IMR-90 (cell line): ENCODE measurements at regions of chr10 and their contacts with region 1.

Region 1: DNA sequence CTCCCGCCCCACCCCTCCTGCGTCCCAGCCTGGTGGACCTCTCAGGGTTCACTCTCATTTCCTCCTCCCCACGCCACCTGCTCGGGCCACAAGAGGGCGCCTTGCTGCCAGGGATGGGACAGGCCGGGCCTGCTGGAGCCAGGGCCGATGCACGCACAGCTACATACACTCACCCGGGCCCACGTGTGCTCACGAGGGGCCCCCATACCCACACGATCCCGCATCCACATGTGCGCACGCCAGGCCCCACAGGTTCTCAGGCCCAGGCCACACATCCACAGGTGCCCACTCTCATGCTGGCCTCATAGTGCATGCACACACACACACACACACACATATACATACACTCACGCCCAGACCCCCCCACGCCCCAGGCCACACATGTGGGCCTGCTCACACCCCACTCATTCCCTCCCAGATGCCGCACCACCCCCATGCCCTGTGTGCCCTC is 68.6 kb downstream of the LHPP start:
- DNase-seq: peak; percentile 74
- ATAC-seq: peak; percentile 99
- H3K4me3 ChIP-seq: no peak overlapping the region
- H3K27ac ChIP-seq: no peak overlapping the region
- H3K4me1 ChIP-seq: no peaks in the 10 kb centered on the region
- H3K27me3 ChIP-seq: no peaks in the 10 kb centered on the region
- CTCF ChIP-seq: peak; percentile 96
- POLR2A ChIP-seq: no peak
- RAD21 ChIP-seq: peak; percentile 98

Region 2: GRCh38 chr10:124791378-124792348 is 261.4 kb after region 1 on chr10 and contains the start of gene EEF1AKMT2:
- CTCF ChIA-PET with region 1: no interaction called
- POLR2A ChIA-PET with region 1: no interaction called
- dilution Hi-C with region 1: no loop called
- in situ Hi-C with region 1: no loop called
- intact Hi-C with region 1: loop called (anchors 5 kb)
- DNase-seq: peak; percentile 82
- ATAC-seq: peak; percentile 99
- H3K4me3 ChIP-seq: peak within 1 kb of the TSS; percentile 87
- H3K27ac ChIP-seq: peak within 1 kb of the TSS; percentile 84
- H3K4me1 ChIP-seq: no peaks in the 10 kb centered on the region; the same call in 1 of the 2 replicates
- H3K27me3 ChIP-seq: no peaks in the 10 kb centered on the region
- CTCF ChIP-seq: no peak
- POLR2A ChIP-seq: peak; percentile 82; the same call in 1 of the 2 replicates
- RAD21 ChIP-seq: no peak; the same call in 1 of the 2 replicates
- total RNA-seq, gene EEF1AKMT2: 9.7 and 22.8 TPM in 2 replicates

Region 3: GRCh38 chr10:124827474-124827873 is 297.2 kb after region 1 on chr10:
- CTCF ChIA-PET with region 1: interaction called, 4 read pairs
- POLR2A ChIA-PET with region 1: no interaction called
- dilution Hi-C with region 1: no loop called
- in situ Hi-C with region 1: no loop called
- intact Hi-C with region 1: loop called (anchors 2 kb)
- DNase-seq: peak; percentile 14
- ATAC-seq: no peak
- H3K4me3 ChIP-seq: no peak overlapping the region
- H3K27ac ChIP-seq: no peak overlapping the region
- H3K4me1 ChIP-seq: no peaks in the 10 kb centered on the region
- H3K27me3 ChIP-seq: no peaks in the 10 kb centered on the region
- CTCF ChIP-seq: peak; percentile 47
- POLR2A ChIP-seq: no peak
- RAD21 ChIP-seq: peak; percentile 30

Region 4: GRCh38 chr10:124983255-124983705 is 453.0 kb after region 1 on chr10:
- CTCF ChIA-PET with region 1: no interaction called
- POLR2A ChIA-PET with region 1: no interaction called
- dilution Hi-C with region 1: no loop called
- in situ Hi-C with region 1: loop called (anchors 25 kb)
- intact Hi-C with region 1: loop called (anchors 10 kb)
- DNase-seq: no peak
- ATAC-seq: no peak
- H3K4me3 ChIP-seq: no peak overlapping the region
- H3K27ac ChIP-seq: no peak overlapping the region
- H3K4me1 ChIP-seq: no peaks in the 10 kb centered on the region
- H3K27me3 ChIP-seq: no peaks in the 10 kb centered on the region
- CTCF ChIP-seq: no peak
- POLR2A ChIP-seq: no peak
- RAD21 ChIP-seq: no peak

Region 5: DNA sequence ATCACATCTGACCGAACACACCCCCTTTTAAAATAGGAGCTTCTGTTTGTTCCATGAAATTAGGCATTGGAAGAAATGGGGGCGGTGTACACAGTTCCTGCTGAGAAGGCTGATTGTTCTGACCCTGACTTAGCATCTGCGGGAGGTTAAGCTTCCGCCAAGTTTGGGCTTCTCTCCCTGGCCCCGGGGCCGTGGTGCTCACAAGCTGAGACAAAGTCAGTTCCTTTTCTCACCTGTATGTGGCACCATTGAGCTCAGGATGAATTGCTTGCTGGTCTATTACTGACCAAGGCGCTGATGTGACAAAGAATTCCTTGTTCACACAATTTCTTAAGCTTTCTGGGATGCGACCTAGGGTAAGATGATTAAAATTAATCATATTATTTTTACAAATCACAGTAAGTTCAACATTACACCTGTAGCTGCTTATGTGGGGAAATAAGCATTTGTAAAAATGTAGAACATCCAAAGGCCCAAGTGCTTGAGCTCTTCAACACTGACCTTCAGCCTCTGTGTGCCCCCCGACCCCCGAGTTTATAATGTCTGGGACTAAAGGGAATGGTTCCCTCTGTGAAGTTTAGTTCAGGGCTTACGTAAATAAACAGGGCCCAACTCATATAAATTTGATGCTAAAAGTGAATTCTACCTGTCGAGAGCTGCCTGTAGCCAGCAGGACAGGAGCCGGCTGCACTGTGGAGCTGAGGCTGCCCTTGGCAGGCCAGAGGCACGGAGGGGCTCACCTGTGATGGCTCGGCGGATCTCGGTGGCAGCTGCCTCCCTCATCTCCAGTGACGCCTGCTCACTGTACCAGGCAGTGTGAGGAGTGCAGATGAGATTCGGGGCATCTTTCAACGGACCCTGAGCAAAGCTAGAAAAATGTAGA is 462.5 kb after region 1 on chr10:
- CTCF ChIA-PET with region 1: no interaction called
- POLR2A ChIA-PET with region 1: no interaction called
- dilution Hi-C with region 1: no loop called
- in situ Hi-C with region 1: loop called (anchors 25 kb)
- intact Hi-C with region 1: loop called (anchors 10 kb)
- DNase-seq: peak; percentile 63
- ATAC-seq: peak; percentile 74
- H3K4me3 ChIP-seq: no peak overlapping the region
- H3K27ac ChIP-seq: no peak overlapping the region
- H3K4me1 ChIP-seq: no peaks in the 10 kb centered on the region
- H3K27me3 ChIP-seq: no peaks in the 10 kb centered on the region
- CTCF ChIP-seq: peak; percentile 47
- POLR2A ChIP-seq: no peak
- RAD21 ChIP-seq: peak; percentile 55